ENCODE measurements at regions of chr20 and their contacts with region 1.

Region 1: GRCh38 chr20:1776681-1777475 is 118.3 kb upstream of the SIRPA start:
- DNase-seq: peak; percentile 86
- ATAC-seq: peak; percentile 86
- H3K4me3 Mint-ChIP-seq: peak overlapping the region; percentile 84
- H3K27ac Mint-ChIP-seq: peak overlapping the region; percentile 44
- H3K4me1 Mint-ChIP-seq: peaks cover 13% of the 10 kb centered on the region
- H3K27me3 Mint-ChIP-seq: peaks cover 6% of the 10 kb centered on the region
- CTCF ChIP-seq: peak; percentile 89

Region 2: GRCh38 chr20:1466211-1467081 is 310.4 kb before region 1 on chr20 and contains the start of gene NSFL1C:
- CTCF ChIA-PET with region 1: interaction called, 24 read pairs
- POLR2A ChIA-PET with region 1: interaction called, 3 read pairs
- intact Hi-C with region 1: no loop called
- DNase-seq: peak; percentile 96
- ATAC-seq: peak; percentile 97
- H3K4me3 Mint-ChIP-seq: peak within 1 kb of the TSS; percentile 83
- H3K27ac Mint-ChIP-seq: peak within 1 kb of the TSS; percentile 79
- H3K4me1 Mint-ChIP-seq: peaks cover 46% of the 10 kb centered on the region
- H3K27me3 Mint-ChIP-seq: peaks cover 4% of the 10 kb centered on the region
- CTCF ChIP-seq: peak; percentile 100
- total RNA-seq, gene NSFL1C: 67.2 to 67.9 TPM

Region 3: DNA sequence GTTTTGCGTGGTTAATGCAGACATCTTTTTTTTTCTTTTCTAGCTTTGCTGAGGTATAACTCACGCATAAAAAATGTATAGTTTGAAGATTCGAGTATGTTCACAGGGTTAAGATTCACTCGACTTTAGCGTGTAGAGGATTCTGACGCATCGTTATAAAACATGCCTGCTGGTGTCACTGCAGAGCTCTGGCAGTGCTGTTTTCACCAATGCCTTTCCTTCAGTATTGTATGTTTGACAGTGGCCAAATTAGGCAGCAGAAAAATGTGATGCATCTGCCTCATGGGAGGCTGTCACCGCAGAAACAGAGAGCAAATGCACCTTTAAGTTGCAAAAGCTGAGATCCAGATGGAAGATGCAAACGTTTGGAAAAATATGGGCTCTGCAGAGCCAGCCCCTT is 267.6 kb before region 1 on chr20:
- CTCF ChIA-PET with region 1: interaction called, 62 read pairs
- POLR2A ChIA-PET with region 1: no interaction called
- intact Hi-C with region 1: no loop called
- DNase-seq: peak; percentile 58
- ATAC-seq: peak; percentile 74
- H3K4me3 Mint-ChIP-seq: no peak overlapping the region
- H3K27ac Mint-ChIP-seq: no peak overlapping the region
- H3K4me1 Mint-ChIP-seq: no peaks in the 10 kb centered on the region
- H3K27me3 Mint-ChIP-seq: peaks cover 8% of the 10 kb centered on the region
- CTCF ChIP-seq: peak; percentile 32

Region 4: DNA sequence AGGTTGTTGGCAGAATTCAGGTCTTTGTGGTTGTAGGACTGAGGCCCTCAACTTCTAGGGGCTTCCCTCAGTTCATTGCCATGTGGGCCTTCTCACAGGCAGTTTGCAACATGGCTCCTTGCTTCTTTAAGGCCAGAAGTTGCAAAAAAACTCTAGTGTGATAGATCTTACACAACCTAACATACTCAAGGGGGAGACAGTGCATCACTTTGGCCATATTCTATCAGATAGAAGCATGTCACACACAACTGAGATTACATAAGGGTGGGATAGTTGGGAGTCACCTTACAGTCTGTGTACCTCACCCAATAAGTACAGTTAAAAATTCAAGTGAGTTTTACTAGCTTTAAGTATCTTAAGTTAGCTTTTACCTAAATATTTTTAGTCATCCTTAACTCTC is 220.9 kb before region 1 on chr20:
- CTCF ChIA-PET with region 1: interaction called, 31 read pairs
- POLR2A ChIA-PET with region 1: no interaction called
- intact Hi-C with region 1: no loop called
- DNase-seq: no peak
- ATAC-seq: peak; percentile 61
- H3K4me3 Mint-ChIP-seq: no peak overlapping the region
- H3K27ac Mint-ChIP-seq: no peak overlapping the region
- H3K4me1 Mint-ChIP-seq: peaks cover 7% of the 10 kb centered on the region
- H3K27me3 Mint-ChIP-seq: no peaks in the 10 kb centered on the region
- CTCF ChIP-seq: peak; percentile 41

Region 5: GRCh38 chr20:1757072-1757471 is 19.8 kb before region 1 on chr20:
- CTCF ChIA-PET with region 1: interaction called, 26 read pairs
- POLR2A ChIA-PET with region 1: no interaction called
- intact Hi-C with region 1: no loop called
- DNase-seq: no peak
- ATAC-seq: no peak
- H3K4me3 Mint-ChIP-seq: no peak overlapping the region
- H3K27ac Mint-ChIP-seq: no peak overlapping the region
- H3K4me1 Mint-ChIP-seq: peaks cover 7% of the 10 kb centered on the region
- H3K27me3 Mint-ChIP-seq: no peaks in the 10 kb centered on the region
- CTCF ChIP-seq: no peak

Region 6: DNA sequence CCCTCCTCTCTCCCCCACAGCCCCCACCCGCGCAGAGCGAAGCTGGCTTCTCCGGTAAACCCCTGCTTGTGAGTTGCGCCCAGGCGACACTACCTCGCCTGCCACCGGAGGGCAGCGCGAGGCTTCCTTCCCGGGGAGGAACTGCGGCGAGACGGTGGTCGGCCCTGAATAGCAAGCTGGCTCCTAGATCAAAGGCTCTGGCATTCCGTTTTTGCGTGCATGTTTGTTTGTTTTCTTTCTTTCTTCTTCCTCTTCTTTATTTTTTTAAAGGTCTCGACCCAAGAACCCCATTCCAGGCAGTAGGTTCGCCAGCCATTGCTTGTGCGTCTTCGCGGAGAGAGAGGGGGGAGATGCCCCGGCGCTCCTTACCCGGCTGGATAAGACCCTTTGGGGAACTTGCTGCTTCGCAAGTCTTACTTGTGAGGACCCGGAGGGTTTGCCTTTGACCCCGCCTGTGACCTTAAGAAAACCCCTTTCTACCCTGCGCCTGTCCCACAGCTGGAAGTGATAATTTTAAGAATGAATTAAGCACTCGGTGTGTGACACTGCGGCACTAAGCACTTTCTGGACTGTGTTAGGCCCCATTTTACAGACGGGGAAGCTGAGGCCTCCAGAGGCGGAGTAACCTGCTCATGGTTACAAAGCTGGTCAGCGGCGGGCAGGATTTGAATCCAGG is 25.6 kb after region 1 on chr20:
- CTCF ChIA-PET with region 1: interaction called, 24 read pairs
- POLR2A ChIA-PET with region 1: no interaction called
- intact Hi-C with region 1: no loop called
- DNase-seq: peak; percentile 66
- ATAC-seq: peak; percentile 87
- H3K4me3 Mint-ChIP-seq: peak overlapping the region; percentile 53
- H3K27ac Mint-ChIP-seq: no peak overlapping the region
- H3K4me1 Mint-ChIP-seq: peaks cover 6% of the 10 kb centered on the region
- H3K27me3 Mint-ChIP-seq: peaks cover 50% of the 10 kb centered on the region
- CTCF ChIP-seq: peak; percentile 68

Region 7: GRCh38 chr20:1841554-1842140 is 64.8 kb after region 1 on chr20:
- CTCF ChIA-PET with region 1: no interaction called
- POLR2A ChIA-PET with region 1: no interaction called
- intact Hi-C with region 1: no loop called
- DNase-seq: no peak
- ATAC-seq: no peak
- H3K4me3 Mint-ChIP-seq: no peak overlapping the region
- H3K27ac Mint-ChIP-seq: no peak overlapping the region
- H3K4me1 Mint-ChIP-seq: peaks cover 9% of the 10 kb centered on the region
- H3K27me3 Mint-ChIP-seq: peaks cover 2% of the 10 kb centered on the region
- CTCF ChIP-seq: no peak

Region 8: DNA sequence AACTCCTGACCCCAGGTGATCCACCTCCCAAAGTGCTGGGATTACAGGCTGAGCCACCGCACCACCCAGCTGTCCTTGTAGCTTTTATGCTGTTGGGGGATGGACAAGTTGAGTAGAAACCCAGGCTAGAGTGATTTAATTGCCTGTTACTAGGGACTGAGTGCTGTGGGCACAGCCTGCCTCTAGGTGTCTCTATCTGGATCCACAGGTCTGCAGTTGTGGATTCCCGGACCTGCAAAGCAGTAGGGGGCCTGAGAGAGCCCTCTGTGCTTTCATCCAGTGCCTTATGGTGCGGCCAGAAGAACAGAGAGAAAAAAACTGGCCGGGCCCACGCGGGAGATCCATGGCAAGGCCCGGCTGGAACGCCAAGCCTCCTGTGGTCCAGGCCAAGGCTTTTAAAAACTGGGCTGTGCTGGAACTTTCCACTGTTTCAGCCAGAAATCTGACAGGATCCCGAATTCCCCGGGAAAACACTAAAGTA is 123.5 kb after region 1 on chr20:
- CTCF ChIA-PET with region 1: no interaction called
- POLR2A ChIA-PET with region 1: no interaction called
- intact Hi-C with region 1: no loop called
- DNase-seq: peak; percentile 11
- ATAC-seq: peak; percentile 70
- H3K4me3 Mint-ChIP-seq: no peak overlapping the region
- H3K27ac Mint-ChIP-seq: no peak overlapping the region
- H3K4me1 Mint-ChIP-seq: no peaks in the 10 kb centered on the region
- H3K27me3 Mint-ChIP-seq: peaks cover 40% of the 10 kb centered on the region
- CTCF ChIP-seq: peak; percentile 19

Measured in activated CD8-positive, alpha-beta T cell treated with anti-CD3 and anti-CD28 coated beads for 36 hours (primary cell).